ENCODE measurements at regions of chr7 and their contacts with region 1.

Region 1: DNA sequence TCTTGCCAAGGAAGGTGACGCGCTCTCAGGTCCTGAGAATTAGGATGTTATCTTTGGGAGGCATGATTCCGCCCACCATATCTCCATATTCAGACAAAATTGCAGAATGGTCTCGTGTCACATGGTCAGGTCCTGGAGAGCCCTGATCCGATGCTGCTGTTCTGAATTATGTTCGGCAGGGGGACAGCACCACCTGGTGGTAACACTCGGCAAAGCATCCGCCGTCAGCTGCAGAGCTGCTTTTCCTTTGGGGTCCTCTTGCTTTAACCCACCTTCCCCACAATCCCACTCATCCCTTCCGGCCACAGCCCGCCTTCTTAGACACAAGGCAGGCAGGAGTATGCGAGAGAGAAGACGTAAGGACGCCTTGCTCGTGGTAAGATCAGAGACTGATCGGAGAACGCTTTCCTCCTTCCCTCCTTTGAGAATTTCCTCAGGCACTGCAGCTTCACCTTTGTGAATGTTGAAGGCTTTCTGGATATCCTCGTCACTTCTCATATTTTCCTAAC is 327.8 kb upstream of the C7orf33 start:
- DNase-seq: peak; percentile 75
- H3K4me3 ChIP-seq: peak overlapping the region; percentile 17
- H3K27ac ChIP-seq: no peak overlapping the region
- H3K4me1 ChIP-seq: peaks cover 5% of the 10 kb centered on the region
- H3K27me3 ChIP-seq: no peaks in the 10 kb centered on the region
- CTCF ChIP-seq: peak; percentile 98

Region 2: GRCh38 chr7:148480479-148481146 is 217.8 kb after region 1 on chr7:
- CTCF ChIA-PET with region 1: interaction called, 17 read pairs
- POLR2A ChIA-PET with region 1: no interaction called
- intact Hi-C with region 1: loop called (anchors 1 kb)
- DNase-seq: peak; percentile 32
- H3K4me3 ChIP-seq: no peak overlapping the region
- H3K27ac ChIP-seq: no peak overlapping the region
- H3K4me1 ChIP-seq: no peaks in the 10 kb centered on the region
- H3K27me3 ChIP-seq: no peaks in the 10 kb centered on the region
- CTCF ChIP-seq: peak; percentile 37; the same call in 1 of the 2 replicates

Region 3: GRCh38 chr7:148485618-148486017 is 222.8 kb after region 1 on chr7:
- CTCF ChIA-PET with region 1: interaction called, 17 read pairs
- POLR2A ChIA-PET with region 1: no interaction called
- intact Hi-C with region 1: loop called (anchors 1 kb)
- DNase-seq: peak; percentile 34
- H3K4me3 ChIP-seq: no peak overlapping the region
- H3K27ac ChIP-seq: no peak overlapping the region
- H3K4me1 ChIP-seq: no peaks in the 10 kb centered on the region
- H3K27me3 ChIP-seq: no peaks in the 10 kb centered on the region
- CTCF ChIP-seq: peak; percentile 55

Region 4: DNA sequence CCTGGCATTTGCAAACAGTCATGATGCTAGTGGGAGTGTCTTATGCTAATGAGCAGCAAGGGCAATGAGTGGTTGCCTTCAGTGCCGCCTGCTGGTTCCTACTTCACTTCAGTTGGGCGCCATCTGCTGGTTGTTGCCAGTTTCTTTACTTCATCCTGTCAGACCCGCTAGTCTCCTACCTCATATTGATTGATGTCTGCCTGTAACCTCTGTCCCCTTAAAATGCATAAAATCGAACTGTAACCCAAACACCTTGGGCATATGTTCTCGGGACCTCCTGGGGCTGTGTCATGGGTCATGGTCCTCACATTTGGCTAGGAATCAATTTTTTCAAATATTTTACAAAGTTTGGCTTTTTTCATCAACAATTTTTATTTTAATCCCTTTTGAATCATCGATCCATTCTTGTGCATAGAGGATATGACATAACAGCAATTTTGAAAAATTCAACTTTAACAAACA is 265.0 kb after region 1 on chr7:
- CTCF ChIA-PET with region 1: interaction called, 5 read pairs
- POLR2A ChIA-PET with region 1: no interaction called
- intact Hi-C with region 1: loop called (anchors 10 kb)
- DNase-seq: peak; percentile 95
- H3K4me3 ChIP-seq: no peak overlapping the region
- H3K27ac ChIP-seq: no peak overlapping the region
- H3K4me1 ChIP-seq: no peaks in the 10 kb centered on the region
- H3K27me3 ChIP-seq: no peaks in the 10 kb centered on the region
- CTCF ChIP-seq: peak; percentile 95